Left cardiac atrium (tissue), 4 donors: ENCODE measurements at regions of chr1 and their contacts with region 1.

Region 1: GRCh38 chr1:45521398-45522323 is at the start of gene PRDX1:
- DNase-seq: peak; percentile 97
- ATAC-seq: peak; percentile 97 to 98
- total RNA-seq, gene PRDX1: 599 to 604 TPM

Region 2: GRCh38 chr1:45478121-45478814 is 43.4 kb before region 1 on chr1:
- intact Hi-C with region 1: no loop called
- DNase-seq: no peak
- ATAC-seq: no peak

Region 3: GRCh38 chr1:45550401-45551351 is 29.0 kb after region 1 on chr1 and contains the start of gene AKR1A1:
- intact Hi-C with region 1: loop called in 1 of 2 experiments (anchors 2 kb)
- DNase-seq: peak; percentile 90
- ATAC-seq: peak; percentile 98
- total RNA-seq, gene AKR1A1: 96.8 to 103 TPM

Region 4: DNA sequence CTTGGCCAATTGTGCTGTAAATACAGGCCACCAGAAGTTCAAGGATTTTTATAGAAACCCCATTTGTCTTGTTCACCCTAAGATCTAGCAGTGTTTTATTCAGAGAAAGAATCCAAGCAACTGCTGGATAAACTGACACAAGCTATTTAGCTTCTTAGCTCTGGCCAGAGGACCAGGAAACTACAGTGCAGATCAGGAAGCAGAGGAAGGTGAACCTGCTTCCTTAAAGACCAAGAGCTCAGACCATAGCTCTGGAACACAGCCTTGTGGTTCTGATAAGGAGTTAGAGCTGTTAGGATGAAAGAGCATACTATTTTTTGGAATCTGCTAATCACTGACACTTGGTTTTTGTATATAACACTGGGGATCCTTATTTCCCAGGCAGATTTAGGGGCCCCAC is 107.4 kb after region 1 on chr1:
- intact Hi-C with region 1: no loop called
- DNase-seq: no peak
- ATAC-seq: no peak

Region 5: DNA sequence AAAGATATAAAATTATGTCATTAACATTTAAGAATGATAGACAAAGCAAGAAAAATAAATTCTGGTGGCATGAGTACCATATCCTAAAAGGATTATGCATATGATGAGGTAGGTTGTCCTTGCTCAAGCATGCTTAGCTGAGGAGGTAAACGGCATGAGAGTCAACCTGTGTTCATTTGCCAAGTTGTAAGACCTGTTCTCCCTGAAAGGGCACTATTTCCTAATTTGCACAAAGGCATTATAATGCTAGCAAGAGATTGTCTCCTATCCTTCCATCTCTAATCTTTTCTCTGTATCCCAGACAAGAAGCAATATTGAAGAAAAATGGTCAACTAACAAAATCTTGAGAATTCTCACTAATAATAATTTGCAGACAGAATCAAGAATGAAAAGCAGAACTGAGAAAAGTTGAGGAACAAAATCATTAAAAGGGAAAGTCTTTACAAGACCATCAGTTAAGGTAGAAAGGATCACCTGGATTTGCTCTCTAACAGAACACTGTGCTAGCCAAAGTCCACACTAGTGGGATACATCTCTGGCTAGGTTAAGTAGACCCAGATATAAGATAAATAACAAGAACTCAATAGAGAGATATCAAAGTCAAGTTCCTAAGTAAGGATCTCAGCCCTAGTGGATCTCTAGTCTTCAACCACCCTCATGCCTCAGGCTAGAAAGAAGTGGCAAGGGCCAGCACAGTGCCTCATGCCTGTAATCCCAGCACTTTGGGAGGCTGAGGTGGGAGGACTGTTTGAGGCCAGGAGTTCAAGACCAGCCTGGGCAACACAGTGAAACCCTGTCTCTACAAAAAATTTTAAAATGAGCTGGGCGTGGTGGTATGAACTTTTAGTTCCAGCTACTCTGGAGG is 209.0 kb after region 1 on chr1:
- intact Hi-C with region 1: no loop called
- DNase-seq: no peak
- ATAC-seq: no peak